ENCODE measurements at regions of chr16 and their contacts with region 1.

Region 1: GRCh38 chr16:27374804-27375425 is 27.1 kb upstream of the IL21R start:
- DNase-seq: peak; percentile 77
- H3K4me3 Mint-ChIP-seq: no peak overlapping the region
- H3K27ac Mint-ChIP-seq: no peak overlapping the region
- H3K4me1 Mint-ChIP-seq: peaks cover 28% of the 10 kb centered on the region
- H3K27me3 Mint-ChIP-seq: no peaks in the 10 kb centered on the region

Region 2: DNA sequence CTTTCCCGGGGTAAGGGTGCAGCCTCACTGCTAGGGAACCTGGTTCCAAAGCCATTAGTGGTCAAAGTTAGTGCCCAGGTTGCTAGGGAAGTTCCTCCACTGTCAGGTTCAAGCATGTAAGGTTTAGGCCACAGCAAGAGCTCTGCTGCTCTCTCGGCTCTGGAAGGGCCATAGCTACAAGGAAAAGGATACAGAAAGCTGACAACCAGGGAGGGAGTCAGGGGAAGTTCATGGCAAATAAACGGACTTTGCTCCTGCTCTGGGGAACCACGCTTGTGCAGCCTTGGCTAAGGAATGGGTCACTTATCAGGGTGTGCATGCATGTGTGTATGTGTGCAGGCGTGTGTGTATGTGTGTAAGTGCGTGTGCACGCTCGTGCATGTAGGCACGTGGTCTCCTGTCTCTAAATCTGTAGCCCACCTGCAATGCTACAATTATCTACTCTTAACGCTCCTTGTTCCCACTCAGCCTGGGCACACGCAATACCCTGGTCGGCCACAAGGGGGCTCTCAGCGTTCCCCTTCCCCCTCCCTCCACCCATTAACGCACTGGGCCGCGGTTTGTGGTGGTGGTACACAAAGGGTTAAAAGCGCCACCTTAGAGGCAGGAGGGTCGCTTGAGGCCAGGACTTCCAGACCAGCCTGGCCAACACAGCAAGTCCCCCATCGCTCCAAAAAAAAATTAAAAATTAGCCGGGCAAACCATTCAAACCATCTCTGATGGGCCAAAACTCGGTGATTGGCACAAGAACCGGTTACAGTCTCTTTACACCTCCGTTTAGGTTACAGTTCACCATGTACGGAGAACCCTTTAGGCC is 220.0 kb before region 1 on chr16:
- intact Hi-C with region 1: no loop called
- DNase-seq: peak; percentile 90
- H3K4me3 Mint-ChIP-seq: no peak overlapping the region
- H3K27ac Mint-ChIP-seq: no peak overlapping the region
- H3K4me1 Mint-ChIP-seq: peaks cover 10% of the 10 kb centered on the region
- H3K27me3 Mint-ChIP-seq: peaks cover 5% of the 10 kb centered on the region

Region 3: DNA sequence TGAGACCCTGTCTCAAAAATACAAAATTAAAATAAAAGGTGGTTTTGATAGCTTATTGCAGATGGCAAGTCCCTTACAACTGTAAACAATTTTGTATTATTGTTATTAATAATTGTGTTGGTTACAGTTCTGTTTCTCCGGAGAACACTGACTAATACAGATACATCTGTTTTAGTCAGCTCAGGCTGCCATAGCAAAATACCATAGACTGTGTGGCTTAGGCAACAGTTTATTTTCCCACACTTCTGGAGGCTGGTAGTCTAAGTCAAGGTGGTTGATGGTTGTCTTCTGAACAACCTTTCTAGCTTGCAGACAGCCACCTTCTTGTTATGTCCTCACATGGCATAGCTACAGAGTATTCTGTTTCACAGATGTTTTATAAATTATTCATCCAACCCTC is 12.8 kb after region 1 on chr16:
- intact Hi-C with region 1: loop called (anchors 1 kb)
- DNase-seq: peak; percentile 58
- H3K4me3 Mint-ChIP-seq: no peak overlapping the region
- H3K27ac Mint-ChIP-seq: peak overlapping the region; percentile 76
- H3K4me1 Mint-ChIP-seq: peaks cover 14% of the 10 kb centered on the region
- H3K27me3 Mint-ChIP-seq: no peaks in the 10 kb centered on the region

Region 4: GRCh38 chr16:27401768-27402568 is 27.1 kb after region 1 on chr16 and contains the start of gene IL21R:
- intact Hi-C with region 1: loop called (anchors 1 kb)
- DNase-seq: peak; percentile 94
- H3K4me3 Mint-ChIP-seq: peak within 1 kb of the TSS; percentile 100
- H3K27ac Mint-ChIP-seq: peak within 1 kb of the TSS; percentile 97
- H3K4me1 Mint-ChIP-seq: peaks cover 47% of the 10 kb centered on the region
- H3K27me3 Mint-ChIP-seq: no peaks in the 10 kb centered on the region
- total RNA-seq, gene IL21R: 94.9 and 100 TPM in 2 replicates

Region 5: DNA sequence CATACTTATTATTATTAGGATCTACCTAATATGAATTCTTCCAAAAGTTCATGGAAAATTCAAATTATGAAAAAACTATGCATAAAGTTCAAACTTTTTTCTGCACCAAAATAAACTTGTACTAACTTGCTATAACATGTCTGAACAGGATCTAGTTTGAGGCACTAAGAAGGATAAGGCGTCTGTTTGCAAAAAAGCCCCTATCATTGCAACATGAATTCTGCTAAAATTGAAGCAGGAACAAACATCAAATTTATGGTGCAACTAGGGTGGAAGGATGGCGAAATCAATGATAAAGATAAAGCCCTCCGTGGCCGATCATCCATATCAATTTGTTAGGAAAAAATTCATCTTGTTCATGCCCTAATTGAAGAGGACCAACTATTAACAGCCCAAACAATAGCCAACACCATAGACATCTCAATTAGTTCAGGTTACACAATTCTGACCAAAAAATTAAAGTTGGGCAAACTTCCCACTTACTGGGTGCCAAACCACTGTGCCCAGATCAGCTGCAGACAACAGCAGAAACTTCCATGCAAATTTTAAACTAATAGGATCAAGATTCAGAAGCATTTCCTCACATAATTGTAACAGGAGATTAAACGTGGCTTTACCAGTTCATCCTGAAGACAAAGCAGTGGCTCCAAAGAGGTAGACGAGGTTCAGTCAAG is 40.0 kb after region 1 on chr16:
- intact Hi-C with region 1: no loop called
- DNase-seq: no peak
- H3K4me3 Mint-ChIP-seq: no peak overlapping the region
- H3K27ac Mint-ChIP-seq: peak overlapping the region; percentile 22
- H3K4me1 Mint-ChIP-seq: peaks cover 42% of the 10 kb centered on the region
- H3K27me3 Mint-ChIP-seq: no peaks in the 10 kb centered on the region

Region 6: GRCh38 chr16:27549859-27550581 is 175.1 kb after region 1 on chr16 and contains the starts of genes GTF3C1 and KATNIP:
- intact Hi-C with region 1: no loop called
- DNase-seq: peak; percentile 100
- H3K4me3 Mint-ChIP-seq: peak within 1 kb of the TSS; percentile 92
- H3K27ac Mint-ChIP-seq: peak within 1 kb of the TSS; percentile 89
- H3K4me1 Mint-ChIP-seq: peaks cover 35% of the 10 kb centered on the region
- H3K27me3 Mint-ChIP-seq: peaks cover 1% of the 10 kb centered on the region
- total RNA-seq, gene GTF3C1: 54.3 and 56.5 TPM in 2 replicates
- total RNA-seq, gene KATNIP: 17.5 and 18.0 TPM in 2 replicates

Measured in activated CD4-positive, alpha-beta T cell treated with anti-CD3 and anti-CD28 coated beads, Interleukin-2, amount 10 ng/mL, durations not matched to agents 24 days and 14 days (primary cell).